ENCODE measurements at regions of chr3 and their contacts with region 1.

Region 1: DNA sequence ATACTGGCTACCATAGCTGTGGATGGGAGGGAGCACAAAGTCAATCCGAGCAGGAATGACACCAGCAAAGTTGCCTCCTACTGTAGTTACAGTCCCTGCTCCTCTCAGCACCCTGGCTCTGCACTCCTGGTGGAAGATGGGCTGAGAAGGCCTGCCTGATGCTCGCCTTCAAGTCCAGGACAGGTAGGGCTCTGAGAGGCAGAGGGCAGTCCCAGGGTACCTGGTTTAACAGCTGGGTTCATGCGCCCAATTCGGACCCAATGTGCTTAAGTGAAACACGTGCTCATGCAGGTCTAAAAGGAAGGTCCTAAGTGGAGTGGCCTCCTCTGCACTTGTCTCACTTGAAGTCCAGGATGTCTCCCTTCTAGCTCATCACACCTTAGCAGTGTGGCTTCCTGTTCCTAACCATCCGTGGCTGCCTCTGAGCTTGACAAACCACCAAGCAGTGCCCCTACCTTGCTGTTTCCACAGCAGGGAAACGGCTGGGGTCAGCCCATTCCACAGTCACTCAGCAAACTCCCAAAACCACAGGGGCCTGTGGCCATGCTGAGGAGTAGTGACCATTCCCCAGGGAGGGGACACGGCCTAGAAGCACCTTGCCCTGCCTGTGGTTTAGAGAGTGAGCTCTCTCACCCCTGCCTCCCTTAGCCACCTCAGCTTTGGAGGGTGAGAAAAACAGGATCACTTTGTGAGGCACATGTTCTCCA is 3.9 kb upstream of the MUSTN1 start:
- DNase-seq: no peak
- ATAC-seq: peak; percentile 45; the same call in 2 of the 3 replicates
- H3K4me3 ChIP-seq: no peak overlapping the region
- H3K27ac ChIP-seq: no peak overlapping the region
- H3K4me1 ChIP-seq: no peaks in the 10 kb centered on the region; the same call in 1 of the 2 replicates
- H3K27me3 ChIP-seq: no peaks in the 10 kb centered on the region
- CTCF ChIP-seq: no peak
- EP300 ChIP-seq: no peak
- POLR2A ChIP-seq: no peak
- RAD21 ChIP-seq: no peak

Region 2: GRCh38 chr3:52792961-52793695 is 45.6 kb before region 1 on chr3:
- CTCF ChIA-PET with region 1: no interaction called
- POLR2A ChIA-PET with region 1: no interaction called
- RAD21 ChIA-PET with region 1: no interaction called
- SMC1A ChIA-PET with region 1: no interaction called
- in situ Hi-C with region 1: no loop called
- intact Hi-C with region 1: no loop called
- DNase-seq: no peak
- ATAC-seq: no peak
- H3K4me3 ChIP-seq: no peak overlapping the region
- H3K27ac ChIP-seq: no peak overlapping the region
- H3K4me1 ChIP-seq: no peaks in the 10 kb centered on the region
- H3K27me3 ChIP-seq: no peaks in the 10 kb centered on the region; a peak in 1 of 4 replicates
- CTCF ChIP-seq: no peak
- EP300 ChIP-seq: no peak
- POLR2A ChIP-seq: no peak
- RAD21 ChIP-seq: no peak

Region 3: DNA sequence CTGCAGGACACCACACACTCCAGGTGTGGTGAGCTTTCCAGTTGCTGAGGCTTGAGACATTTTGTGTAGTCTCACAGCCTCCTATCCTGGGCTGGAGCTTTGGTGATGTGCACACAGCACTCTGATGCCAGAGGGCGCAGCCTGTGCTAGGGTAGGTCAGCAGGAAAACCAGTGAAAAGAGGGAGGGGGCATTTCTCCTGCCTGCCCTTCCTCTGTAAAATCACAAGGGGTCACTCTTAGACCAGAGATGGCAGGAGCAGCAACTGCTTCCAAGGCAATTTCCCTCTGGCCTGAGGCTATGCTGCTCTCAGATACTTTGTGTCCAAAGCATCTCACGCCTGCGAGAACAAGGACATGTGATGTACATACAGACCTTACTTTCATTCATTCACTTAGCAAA is 12.6 kb after region 1 on chr3:
- CTCF ChIA-PET with region 1: interaction called, 11 read pairs
- POLR2A ChIA-PET with region 1: no interaction called
- RAD21 ChIA-PET with region 1: interaction called, 4 read pairs
- SMC1A ChIA-PET with region 1: interaction called, 4 read pairs
- in situ Hi-C with region 1: no loop called
- intact Hi-C with region 1: no loop called
- DNase-seq: no peak
- ATAC-seq: peak; percentile 78
- H3K4me3 ChIP-seq: no peak overlapping the region
- H3K27ac ChIP-seq: no peak overlapping the region
- H3K4me1 ChIP-seq: peaks cover 3% of the 10 kb centered on the region
- H3K27me3 ChIP-seq: no peaks in the 10 kb centered on the region
- CTCF ChIP-seq: peak; percentile 65 to 83 (median 71)
- EP300 ChIP-seq: no peak
- POLR2A ChIP-seq: no peak
- RAD21 ChIP-seq: peak; percentile 93

Measured in GM12878 (cell line).